Activated T-helper 1 cell treated with anti-CD3 and anti-CD28 coated beads, Interleukin-12 subunit alpha, Interleukin-12 subunit beta, Interleukin-2, Interleukin-4 antibody, amounts not matched to agents 30 ng/mL and 10 ng/mL and 1 ng/mL, durations not matched to agents 14 hours and 24 hours and 36 hours (primary cell): ENCODE measurements at regions of chr5 and their contacts with region 1.

Region 1: DNA sequence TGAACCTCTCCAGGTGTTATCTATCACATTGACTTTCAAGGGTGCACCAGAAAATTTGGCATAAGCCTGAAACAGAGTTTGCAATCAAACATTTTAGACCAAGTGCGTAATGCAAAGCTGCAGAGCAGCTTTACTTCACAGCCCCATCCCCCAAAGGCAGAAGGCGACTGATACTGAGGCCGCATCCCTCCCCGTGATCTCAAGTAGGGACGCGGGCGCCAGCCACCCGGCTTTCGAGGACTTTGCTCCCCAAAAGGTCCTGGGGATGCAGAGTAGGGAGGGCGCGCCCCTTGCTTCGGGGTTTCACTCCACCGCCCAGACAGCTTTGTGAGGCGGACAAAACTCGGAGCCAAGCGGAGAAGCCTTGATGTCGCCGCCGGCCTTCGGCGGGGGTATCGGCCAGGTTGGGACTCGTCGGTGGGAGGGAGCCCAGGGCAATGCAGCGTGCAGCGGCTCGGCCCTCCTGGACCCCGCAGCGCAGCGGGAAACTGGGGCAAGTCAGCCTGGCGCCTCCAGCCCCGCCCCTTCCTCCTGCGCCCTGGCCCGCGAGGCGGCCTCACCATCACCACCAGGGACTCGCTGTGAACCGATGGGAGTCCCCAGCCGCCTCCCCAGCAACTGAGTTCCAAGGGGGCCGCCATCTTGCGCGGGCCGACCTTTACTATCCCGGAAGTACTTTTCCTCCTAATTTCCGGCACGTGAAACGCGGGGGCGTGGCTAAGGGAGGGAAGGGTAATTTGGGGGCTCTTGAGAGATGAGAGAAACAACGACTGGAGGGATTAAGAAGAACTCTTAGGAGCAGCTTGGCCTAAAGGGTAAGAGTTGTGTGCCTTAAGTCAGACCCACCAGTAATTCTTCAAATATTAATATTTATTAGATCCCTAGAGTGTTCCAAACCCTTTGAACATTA is at the start of gene MTX3:
- DNase-seq: peak; percentile 81
- H3K4me3 Mint-ChIP-seq: peak within 1 kb of the TSS; percentile 93
- H3K27ac Mint-ChIP-seq: peak within 1 kb of the TSS; percentile 99
- H3K4me1 Mint-ChIP-seq: peaks cover 54% of the 10 kb centered on the region
- H3K27me3 Mint-ChIP-seq: no peaks in the 10 kb centered on the region
- total RNA-seq, gene MTX3: 31.4 and 32.5 TPM in 2 replicates

Region 2: GRCh38 chr5:79235634-79236363 is 755.1 kb before region 1 on chr5 and contains the start of gene JMY:
- intact Hi-C with region 1: loop called (anchors 1 kb)
- DNase-seq: peak; percentile 77
- H3K4me3 Mint-ChIP-seq: peak within 1 kb of the TSS; percentile 94
- H3K27ac Mint-ChIP-seq: peak within 1 kb of the TSS; percentile 95
- H3K4me1 Mint-ChIP-seq: peaks cover 33% of the 10 kb centered on the region
- H3K27me3 Mint-ChIP-seq: peaks cover 2% of the 10 kb centered on the region
- total RNA-seq, gene JMY: 5.5 and 5.9 TPM in 2 replicates

Region 3: DNA sequence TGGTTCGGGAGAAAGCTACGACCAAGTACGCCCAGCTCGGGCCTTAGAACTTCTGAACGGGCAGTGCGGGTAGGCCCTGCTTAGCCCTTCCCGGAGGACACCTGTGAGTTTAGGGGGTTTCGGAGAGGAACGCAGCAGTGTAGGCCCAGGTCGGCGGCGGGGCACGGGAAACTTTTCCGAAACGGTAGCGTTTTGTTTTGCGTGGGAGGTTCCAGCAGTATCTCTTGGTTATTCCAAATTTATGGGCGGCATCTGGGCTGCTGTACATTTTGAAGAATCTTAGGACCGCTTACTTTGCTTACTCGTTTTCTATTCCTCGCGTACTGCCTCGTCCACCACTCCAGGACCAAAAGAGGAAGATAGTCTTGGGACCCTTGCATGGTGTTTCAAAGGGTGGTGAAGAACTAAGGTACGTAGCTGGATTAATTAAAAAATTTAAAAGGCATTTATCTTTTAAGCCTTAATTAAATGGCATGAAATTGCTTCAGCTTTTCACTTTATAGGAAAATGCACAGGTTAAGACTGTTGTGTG is 378.1 kb before region 1 on chr5:
- intact Hi-C with region 1: loop called (anchors 1 kb)
- DNase-seq: no peak
- H3K4me3 Mint-ChIP-seq: peak overlapping the region; percentile 91
- H3K27ac Mint-ChIP-seq: peak overlapping the region; percentile 97
- H3K4me1 Mint-ChIP-seq: peaks cover 45% of the 10 kb centered on the region
- H3K27me3 Mint-ChIP-seq: no peaks in the 10 kb centered on the region

Region 4: DNA sequence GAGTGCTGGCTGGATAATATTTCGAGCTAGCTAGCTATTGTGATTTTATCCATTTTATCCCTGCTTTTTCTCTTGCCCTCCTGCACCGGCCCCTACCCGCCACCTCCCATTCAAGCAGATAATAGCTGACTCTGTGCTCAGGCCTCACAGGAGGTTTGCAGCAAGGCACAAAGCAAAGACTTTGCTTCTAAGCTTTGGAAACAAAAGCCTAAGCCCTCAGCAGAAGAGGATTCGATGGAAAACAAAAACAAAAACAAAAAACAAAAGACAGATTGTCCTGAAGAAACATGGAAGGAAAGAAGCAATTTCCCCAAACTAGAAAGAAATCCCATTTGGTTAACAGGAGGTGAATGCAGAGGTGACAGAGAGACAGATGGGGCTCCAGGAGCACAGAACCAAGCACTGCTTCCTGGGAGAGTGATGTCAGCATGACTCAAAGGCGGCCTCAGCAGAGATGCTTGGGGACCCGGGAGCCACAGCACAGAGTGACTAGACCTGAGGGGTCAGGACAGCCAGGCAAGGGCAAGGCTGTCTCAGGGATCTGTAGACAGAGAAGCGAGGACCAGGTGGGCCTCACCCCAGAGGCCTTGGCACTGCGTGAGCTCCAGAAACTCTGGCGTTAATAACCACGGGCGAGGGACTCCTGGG is 28.2 kb before region 1 on chr5:
- intact Hi-C with region 1: loop called (anchors 1 kb)
- DNase-seq: peak; percentile 29
- H3K4me3 Mint-ChIP-seq: peak overlapping the region; percentile 35
- H3K27ac Mint-ChIP-seq: peak overlapping the region; percentile 85
- H3K4me1 Mint-ChIP-seq: peaks cover 39% of the 10 kb centered on the region
- H3K27me3 Mint-ChIP-seq: no peaks in the 10 kb centered on the region

Region 5: GRCh38 chr5:80125962-80126480 is 135.2 kb after region 1 on chr5:
- intact Hi-C with region 1: loop called (anchors 1 kb)
- DNase-seq: no peak
- H3K4me3 Mint-ChIP-seq: peak overlapping the region; percentile 48
- H3K27ac Mint-ChIP-seq: peak overlapping the region; percentile 70
- H3K4me1 Mint-ChIP-seq: peaks cover 23% of the 10 kb centered on the region
- H3K27me3 Mint-ChIP-seq: no peaks in the 10 kb centered on the region

Region 6: GRCh38 chr5:80308526-80308925 is 317.7 kb after region 1 on chr5:
- intact Hi-C with region 1: no loop called
- DNase-seq: no peak
- H3K4me3 Mint-ChIP-seq: no peak overlapping the region
- H3K27ac Mint-ChIP-seq: no peak overlapping the region
- H3K4me1 Mint-ChIP-seq: no peaks in the 10 kb centered on the region
- H3K27me3 Mint-ChIP-seq: peaks cover 8% of the 10 kb centered on the region

Region 7: DNA sequence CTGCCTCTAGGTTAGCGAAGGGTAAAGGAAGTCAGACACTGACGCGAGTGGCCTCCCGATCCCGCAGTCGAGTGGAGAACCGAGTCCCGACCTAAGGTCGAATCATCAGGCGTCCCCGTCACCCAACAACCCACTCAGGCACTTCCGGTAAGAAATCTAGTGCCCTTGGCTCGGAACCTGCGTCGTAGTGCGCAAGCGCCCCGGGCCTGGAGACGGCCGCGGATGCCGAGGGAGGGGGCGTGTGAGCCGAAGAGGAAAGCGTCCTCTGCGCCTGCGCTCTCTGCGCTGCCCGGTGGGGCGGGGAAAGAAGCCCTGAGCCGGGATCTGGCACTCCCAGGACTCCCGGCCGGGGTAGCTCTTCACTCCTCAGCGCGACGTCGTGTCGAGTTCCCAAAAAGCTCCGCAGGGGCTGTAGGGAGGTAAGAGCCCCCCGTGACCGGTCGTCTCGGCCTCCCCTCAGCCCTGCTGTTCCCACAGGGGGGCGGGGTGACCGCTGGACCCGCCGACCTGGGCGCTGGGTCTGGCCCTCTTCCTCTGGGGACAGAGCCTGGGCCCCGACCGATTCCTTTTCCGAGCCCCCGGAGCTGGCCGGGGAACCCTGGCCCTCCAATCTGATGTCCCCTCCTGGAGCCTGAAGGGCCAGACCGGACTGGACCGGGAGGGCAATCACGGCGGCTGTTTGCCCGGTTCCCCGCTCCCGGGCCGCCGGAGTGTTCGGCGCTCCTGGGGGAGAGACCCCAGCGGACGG is 417.1 kb after region 1 on chr5 and contains the start of gene ZFYVE16:
- intact Hi-C with region 1: loop called (anchors 1 kb)
- DNase-seq: peak; percentile 95
- H3K4me3 Mint-ChIP-seq: peak within 1 kb of the TSS; percentile 96
- H3K27ac Mint-ChIP-seq: peak within 1 kb of the TSS; percentile 100
- H3K4me1 Mint-ChIP-seq: peaks cover 25% of the 10 kb centered on the region
- H3K27me3 Mint-ChIP-seq: peaks cover 6% of the 10 kb centered on the region
- total RNA-seq, gene ZFYVE16: 9.4 and 10.3 TPM in 2 replicates

Region 8: DNA sequence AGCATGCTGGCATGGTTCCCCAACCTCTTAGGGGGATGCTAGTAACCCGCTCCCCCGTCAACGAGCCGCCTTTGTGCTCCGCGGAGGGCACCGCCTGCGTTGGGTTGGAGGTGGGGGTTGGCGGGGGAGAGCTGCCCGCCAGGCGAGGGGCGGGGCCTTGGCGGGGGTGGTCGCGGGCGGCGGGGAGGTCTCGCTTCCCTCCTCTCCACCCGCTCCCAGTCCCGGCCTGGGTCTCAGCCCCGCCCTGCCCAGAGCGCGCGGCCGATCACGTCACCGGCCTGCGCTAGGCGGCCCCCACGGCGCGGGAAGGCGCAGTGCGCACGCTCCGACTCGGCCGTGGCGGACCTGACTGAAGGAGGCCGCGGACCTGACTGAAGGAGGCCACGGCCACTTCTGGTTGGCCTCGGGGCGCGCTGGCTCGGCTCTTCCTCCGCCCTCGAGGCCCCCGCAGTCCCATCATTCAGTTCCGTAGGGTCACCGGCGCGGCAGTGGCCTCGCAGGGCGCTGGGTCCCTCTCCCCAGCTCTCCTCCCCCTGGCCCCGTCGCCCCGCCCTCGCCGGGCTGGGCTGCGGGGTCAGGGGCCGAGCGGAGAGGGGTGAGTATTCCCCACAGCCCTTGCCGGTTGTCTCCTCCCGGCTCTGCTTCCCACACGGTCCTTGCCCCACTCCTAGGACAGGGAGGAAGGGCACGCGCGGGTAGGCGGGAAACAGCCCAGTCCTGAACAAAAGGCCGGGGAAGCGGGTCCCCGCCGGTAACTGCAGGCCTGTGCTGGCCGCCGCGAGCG is 1981.1 kb after region 1 on chr5 and contains the start of gene ATG10:
- intact Hi-C with region 1: loop called (anchors 2 kb)
- DNase-seq: peak; percentile 86
- H3K4me3 Mint-ChIP-seq: peak within 1 kb of the TSS; percentile 92
- H3K27ac Mint-ChIP-seq: peak within 1 kb of the TSS; percentile 99
- H3K4me1 Mint-ChIP-seq: peaks cover 33% of the 10 kb centered on the region
- H3K27me3 Mint-ChIP-seq: no peaks in the 10 kb centered on the region
- total RNA-seq, gene ATG10: 6.1 and 7.1 TPM in 2 replicates